ENCODE measurements at regions of chrX and their contacts with region 1.

Region 1: DNA sequence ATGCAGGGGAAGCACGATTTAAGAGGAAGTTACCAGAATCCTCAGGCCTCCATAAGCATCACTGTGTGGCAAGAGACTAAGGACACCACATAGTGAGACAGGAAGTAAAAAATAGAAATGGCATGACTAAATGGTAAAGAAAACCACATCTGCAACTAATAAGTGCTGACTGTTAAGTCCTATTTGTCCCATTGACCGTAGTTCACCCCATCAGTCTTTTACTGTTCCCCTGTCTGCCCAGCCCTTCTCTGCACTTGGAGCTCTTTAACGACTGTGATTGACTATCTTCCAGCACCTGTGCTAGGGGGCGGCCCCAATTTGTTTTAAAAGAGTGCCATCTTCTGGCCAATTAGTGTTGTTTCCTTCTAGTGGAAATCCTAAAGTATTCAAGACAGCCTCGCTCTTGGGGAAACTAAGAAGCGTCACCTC is 94.2 kb downstream of the MAOA start:
- DNase-seq: peak; percentile 1 to 64 (median 38)
- H3K4me3 ChIP-seq: no peak overlapping the region
- H3K4me3 Mint-ChIP-seq: no peak overlapping the region
- H3K27ac ChIP-seq: no peak overlapping the region
- H3K27ac Mint-ChIP-seq: no peak overlapping the region
- H3K4me1 ChIP-seq: no peaks in the 10 kb centered on the region
- H3K4me1 Mint-ChIP-seq: peaks cover 0 to 6% (median 0%) of the 10 kb centered on the region in 3 donors
- H3K27me3 ChIP-seq: no peaks in the 10 kb centered on the region
- H3K27me3 Mint-ChIP-seq: peaks cover 0 to 3% of the 10 kb centered on the region in 2 donors

Region 2: DNA sequence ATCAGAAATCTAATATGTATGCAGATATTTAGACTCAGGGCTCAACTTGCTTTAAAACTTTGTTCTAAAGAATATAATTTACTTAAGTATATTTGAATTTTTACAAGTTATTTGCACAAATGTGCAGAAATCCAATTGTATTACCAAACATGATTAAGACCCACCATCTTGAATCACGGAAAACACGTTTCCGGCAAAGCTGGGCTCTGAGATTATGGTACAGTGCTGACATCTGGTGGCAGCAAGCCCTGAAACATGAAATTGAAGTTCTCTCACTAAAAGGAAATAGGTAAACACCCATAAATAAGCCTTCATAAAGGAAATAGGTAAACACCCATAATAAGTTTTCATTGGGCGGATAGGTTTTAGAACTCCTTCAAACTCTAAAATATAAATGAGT is 192.5 kb before region 1 on chrX:
- CTCF ChIA-PET with region 1: interaction called, 13 read pairs
- POLR2A ChIA-PET with region 1: no interaction called
- DNase-seq: peak; percentile 5 to 71 (median 41)
- H3K4me3 ChIP-seq: no peak overlapping the region
- H3K4me3 Mint-ChIP-seq: no peak overlapping the region
- H3K27ac ChIP-seq: no peak overlapping the region
- H3K27ac Mint-ChIP-seq: no peak overlapping the region
- H3K4me1 ChIP-seq: no peaks in the 10 kb centered on the region
- H3K4me1 Mint-ChIP-seq: peaks cover 0 to 11% (median 6%) of the 10 kb centered on the region in 3 donors
- H3K27me3 ChIP-seq: no peaks in the 10 kb centered on the region
- H3K27me3 Mint-ChIP-seq: peaks cover 0 to 7% of the 10 kb centered on the region in 2 donors

Measured in CD8-positive, alpha-beta memory T cell (primary cell).